Calu3 (cell line): ENCODE measurements at regions of chr3 and their contacts with region 1.

Region 1: GRCh38 chr3:87949879-87950208 is 109.0 kb downstream of the CGGBP1 start:
- DNase-seq: no peak
- H3K4me3 Mint-ChIP-seq: no peak overlapping the region
- H3K27ac Mint-ChIP-seq: no peak overlapping the region
- H3K4me1 Mint-ChIP-seq: peaks cover 13% of the 10 kb centered on the region
- H3K27me3 Mint-ChIP-seq: no peaks in the 10 kb centered on the region
- CTCF ChIP-seq: no peak

Region 2: DNA sequence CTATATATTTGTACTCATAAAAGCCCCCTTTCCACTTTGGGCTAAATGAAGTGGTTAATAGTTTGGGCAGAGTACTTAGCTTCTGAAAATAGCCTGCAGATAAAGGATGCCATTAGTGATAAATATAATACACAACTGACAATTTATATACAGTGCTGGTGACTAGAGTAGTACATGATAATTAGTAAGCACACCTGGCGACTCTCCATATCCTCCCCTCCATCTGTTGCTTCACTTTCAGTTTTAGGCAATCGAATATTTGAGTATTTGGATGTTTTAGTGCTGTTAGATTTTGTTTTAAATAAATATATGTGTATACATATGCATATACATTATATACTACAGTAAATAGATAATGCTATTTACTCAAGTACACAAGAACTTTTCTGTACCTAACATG is 758.7 kb before region 1 on chr3:
- CTCF ChIA-PET with region 1: no interaction called
- intact Hi-C with region 1: no loop called
- DNase-seq: no peak
- H3K4me3 Mint-ChIP-seq: no peak overlapping the region
- H3K27ac Mint-ChIP-seq: no peak overlapping the region
- H3K4me1 Mint-ChIP-seq: peaks cover 9% of the 10 kb centered on the region
- H3K27me3 Mint-ChIP-seq: no peaks in the 10 kb centered on the region
- CTCF ChIP-seq: no peak

Region 3: DNA sequence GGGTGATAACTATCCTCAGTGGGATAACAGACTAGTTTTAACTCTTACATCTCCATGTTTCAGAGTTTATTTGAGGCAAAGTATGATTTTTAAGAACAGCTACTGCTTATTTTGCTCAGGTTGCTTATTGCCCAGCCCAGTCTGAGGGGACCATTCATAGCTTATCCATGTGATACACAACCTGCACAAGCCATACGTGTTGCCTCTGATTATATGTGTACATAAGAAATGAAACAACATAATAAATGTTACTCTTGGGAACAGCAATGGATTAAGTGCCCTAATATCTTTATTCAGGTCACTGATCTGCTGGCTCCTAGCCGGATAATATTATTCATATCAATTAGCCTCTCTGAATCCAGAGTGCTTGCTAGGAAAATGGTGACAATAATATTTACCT is 127.3 kb before region 1 on chr3:
- CTCF ChIA-PET with region 1: no interaction called
- intact Hi-C with region 1: no loop called
- DNase-seq: no peak
- H3K4me3 Mint-ChIP-seq: no peak overlapping the region
- H3K27ac Mint-ChIP-seq: no peak overlapping the region
- H3K4me1 Mint-ChIP-seq: no peaks in the 10 kb centered on the region
- H3K27me3 Mint-ChIP-seq: no peaks in the 10 kb centered on the region
- CTCF ChIP-seq: no peak

Region 4: DNA sequence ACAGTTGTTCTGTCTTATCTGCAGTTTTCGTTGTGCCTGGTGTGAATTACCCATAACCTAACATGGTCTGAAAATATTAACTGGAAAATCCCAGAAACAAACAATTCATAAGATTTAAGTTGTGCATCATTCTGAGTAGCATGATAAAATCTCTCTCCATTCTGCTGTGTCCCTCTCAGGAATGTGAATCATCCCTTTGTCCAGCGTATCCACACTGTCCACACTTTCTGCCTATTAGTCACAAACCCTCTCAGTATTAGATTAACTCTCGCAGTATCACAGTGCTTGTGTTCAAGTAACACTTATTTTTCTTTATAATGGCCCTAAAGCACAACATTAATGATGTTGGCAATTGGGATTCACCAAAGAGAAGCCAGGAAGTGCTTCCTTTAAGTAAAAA is 94.2 kb before region 1 on chr3:
- CTCF ChIA-PET with region 1: no interaction called
- intact Hi-C with region 1: loop called (anchors 10 kb)
- DNase-seq: no peak
- H3K4me3 Mint-ChIP-seq: no peak overlapping the region
- H3K27ac Mint-ChIP-seq: no peak overlapping the region
- H3K4me1 Mint-ChIP-seq: no peaks in the 10 kb centered on the region
- H3K27me3 Mint-ChIP-seq: no peaks in the 10 kb centered on the region
- CTCF ChIP-seq: no peak

Region 5: DNA sequence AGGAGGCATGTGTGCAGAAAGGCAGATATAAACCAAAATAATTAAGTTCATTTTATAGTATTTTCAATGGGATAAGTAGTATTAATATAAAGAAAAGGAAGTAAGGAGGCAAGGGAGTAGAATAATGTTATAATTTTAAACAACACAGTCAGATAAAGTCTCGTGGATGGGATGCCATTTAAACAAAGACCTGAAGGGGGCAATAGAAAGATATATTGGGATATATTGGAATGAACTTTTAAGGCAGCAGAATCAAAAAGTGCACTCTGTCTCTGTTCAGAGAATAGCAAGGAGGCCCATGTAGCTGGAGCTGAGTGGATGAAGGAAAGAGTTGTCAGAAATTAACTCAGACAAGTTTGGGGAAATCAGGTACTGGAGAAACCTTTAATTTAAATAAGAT is 49.8 kb before region 1 on chr3:
- CTCF ChIA-PET with region 1: no interaction called
- intact Hi-C with region 1: loop called (anchors 10 kb)
- DNase-seq: no peak
- H3K4me3 Mint-ChIP-seq: no peak overlapping the region
- H3K27ac Mint-ChIP-seq: no peak overlapping the region
- H3K4me1 Mint-ChIP-seq: no peaks in the 10 kb centered on the region
- H3K27me3 Mint-ChIP-seq: no peaks in the 10 kb centered on the region
- CTCF ChIP-seq: no peak

Region 6: GRCh38 chr3:87997298-87997697 is 47.5 kb after region 1 on chr3:
- CTCF ChIA-PET with region 1: no interaction called
- intact Hi-C with region 1: loop called (anchors 5 kb)
- DNase-seq: peak; percentile 60
- H3K4me3 Mint-ChIP-seq: no peak overlapping the region
- H3K27ac Mint-ChIP-seq: peak overlapping the region; percentile 2
- H3K4me1 Mint-ChIP-seq: peaks cover 21% of the 10 kb centered on the region
- H3K27me3 Mint-ChIP-seq: no peaks in the 10 kb centered on the region
- CTCF ChIP-seq: no peak